Activated CD4-positive, alpha-beta memory T cell treated with anti-CD3 and anti-CD28 coated beads for 36 hours (primary cell): ENCODE measurements at regions of chr11 and their contacts with region 1.

Region 1: DNA sequence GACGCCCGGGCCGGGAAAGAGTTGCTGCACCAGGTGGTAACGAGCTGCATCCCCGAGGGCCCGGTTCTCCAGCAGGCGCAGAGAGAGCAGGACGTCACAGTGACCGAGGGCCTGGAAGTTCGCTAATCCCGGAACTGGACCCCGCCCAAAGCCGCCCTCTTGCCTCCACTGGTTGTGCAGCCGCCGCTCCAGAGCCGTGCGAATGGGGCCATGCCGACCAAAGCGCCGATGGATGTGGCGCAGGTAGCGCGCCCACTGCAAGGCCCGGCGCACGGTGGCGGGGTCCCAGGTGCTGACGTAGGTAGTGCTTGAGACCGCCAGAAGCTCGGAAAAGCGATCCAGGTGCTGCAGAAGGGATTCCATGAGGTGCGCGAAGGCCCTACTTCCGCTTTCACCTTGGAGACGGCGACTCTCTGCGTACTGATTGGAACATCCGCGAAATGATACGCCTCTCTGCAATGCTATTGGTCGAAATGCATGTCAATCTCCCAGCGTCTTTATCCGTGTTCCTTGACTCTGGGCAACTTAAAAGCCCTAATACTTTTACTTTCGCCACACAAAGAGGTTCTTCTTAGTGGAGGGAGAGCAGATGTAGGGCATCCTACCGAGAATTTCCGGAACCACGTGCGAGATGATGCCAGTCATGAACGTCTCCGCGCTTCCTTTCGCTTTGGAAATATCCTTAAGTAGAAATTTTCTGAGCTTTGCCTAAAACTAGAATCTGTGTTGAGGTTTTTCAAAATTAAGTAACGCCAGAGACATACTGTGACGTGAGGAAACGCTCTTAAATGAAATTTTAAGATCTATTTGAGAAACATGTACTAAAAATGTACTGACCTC is at the start of gene FANCF:
- DNase-seq: peak; percentile 95
- H3K4me3 Mint-ChIP-seq: peak within 1 kb of the TSS; percentile 97
- H3K27ac Mint-ChIP-seq: peak within 1 kb of the TSS; percentile 96
- H3K4me1 Mint-ChIP-seq: peaks cover 31% of the 10 kb centered on the region
- H3K27me3 Mint-ChIP-seq: no peaks in the 10 kb centered on the region
- total RNA-seq, gene FANCF: 10.5 to 11.1 TPM

Region 2: GRCh38 chr11:22432291-22433093 is 193.2 kb before region 1 on chr11:
- CTCF ChIA-PET with region 1: no interaction called
- POLR2A ChIA-PET with region 1: no interaction called
- intact Hi-C with region 1: no loop called
- DNase-seq: peak; percentile 18
- H3K4me3 Mint-ChIP-seq: peak overlapping the region; percentile 31
- H3K27ac Mint-ChIP-seq: no peak overlapping the region
- H3K4me1 Mint-ChIP-seq: peaks cover 13% of the 10 kb centered on the region
- H3K27me3 Mint-ChIP-seq: peaks cover 25% of the 10 kb centered on the region

Region 3: GRCh38 chr11:22577854-22578253 is 47.8 kb before region 1 on chr11:
- CTCF ChIA-PET with region 1: no interaction called
- POLR2A ChIA-PET with region 1: no interaction called
- intact Hi-C with region 1: loop called (anchors 5 kb)
- DNase-seq: no peak
- H3K4me3 Mint-ChIP-seq: no peak overlapping the region
- H3K27ac Mint-ChIP-seq: no peak overlapping the region
- H3K4me1 Mint-ChIP-seq: no peaks in the 10 kb centered on the region
- H3K27me3 Mint-ChIP-seq: no peaks in the 10 kb centered on the region

Region 4: GRCh38 chr11:22703040-22703439 is 77.4 kb after region 1 on chr11:
- CTCF ChIA-PET with region 1: no interaction called
- POLR2A ChIA-PET with region 1: no interaction called
- intact Hi-C with region 1: loop called (anchors 1 kb)
- DNase-seq: peak; percentile 18
- H3K4me3 Mint-ChIP-seq: no peak overlapping the region
- H3K27ac Mint-ChIP-seq: no peak overlapping the region
- H3K4me1 Mint-ChIP-seq: peaks cover 9% of the 10 kb centered on the region
- H3K27me3 Mint-ChIP-seq: no peaks in the 10 kb centered on the region